K562 (cell line): ENCODE measurements at regions of chr11 and their contacts with region 1.

Region 1: GRCh38 chr11:44286268-44286880 is 23.6 kb downstream of the ALX4 start:
- DNase-seq: peak; percentile 85 to 86 (median 86)
- ATAC-seq: peak; percentile 94
- H3K4me3 ChIP-seq: no peak overlapping the region
- H3K27ac ChIP-seq: no peak overlapping the region
- H3K4me1 ChIP-seq: peaks cover 7 to 13% of the 10 kb centered on the region in 2 experiments; a peak in 4 of 5 replicates
- H3K27me3 ChIP-seq: no peaks in the 10 kb centered on the region
- CTCF ChIP-seq: peak; percentile 93 to 97 (median 95)
- EP300 ChIP-seq: no peak; the same call in 1 of the 2 replicates
- POLR2A ChIP-seq: no peak
- RAD21 ChIP-seq: peak; percentile 96 to 98

Region 2: GRCh38 chr11:44110231-44110679 is 176.1 kb before region 1 on chr11:
- CTCF ChIA-PET with region 1: no interaction called
- POLR2A ChIA-PET with region 1: no interaction called
- in situ Hi-C with region 1: no loop called
- intact Hi-C with region 1: loop called (anchors 5 kb)
- DNase-seq: peak; percentile 60 to 75 (median 66)
- ATAC-seq: peak; percentile 100
- H3K4me3 ChIP-seq: no peak overlapping the region
- H3K27ac ChIP-seq: no peak overlapping the region
- H3K4me1 ChIP-seq: no peaks in the 10 kb centered on the region
- H3K27me3 ChIP-seq: no peaks in the 10 kb centered on the region
- CTCF ChIP-seq: peak; percentile 78 to 93 (median 84)
- EP300 ChIP-seq: no peak
- POLR2A ChIP-seq: no peak
- RAD21 ChIP-seq: peak; percentile 72 to 75

Region 3: DNA sequence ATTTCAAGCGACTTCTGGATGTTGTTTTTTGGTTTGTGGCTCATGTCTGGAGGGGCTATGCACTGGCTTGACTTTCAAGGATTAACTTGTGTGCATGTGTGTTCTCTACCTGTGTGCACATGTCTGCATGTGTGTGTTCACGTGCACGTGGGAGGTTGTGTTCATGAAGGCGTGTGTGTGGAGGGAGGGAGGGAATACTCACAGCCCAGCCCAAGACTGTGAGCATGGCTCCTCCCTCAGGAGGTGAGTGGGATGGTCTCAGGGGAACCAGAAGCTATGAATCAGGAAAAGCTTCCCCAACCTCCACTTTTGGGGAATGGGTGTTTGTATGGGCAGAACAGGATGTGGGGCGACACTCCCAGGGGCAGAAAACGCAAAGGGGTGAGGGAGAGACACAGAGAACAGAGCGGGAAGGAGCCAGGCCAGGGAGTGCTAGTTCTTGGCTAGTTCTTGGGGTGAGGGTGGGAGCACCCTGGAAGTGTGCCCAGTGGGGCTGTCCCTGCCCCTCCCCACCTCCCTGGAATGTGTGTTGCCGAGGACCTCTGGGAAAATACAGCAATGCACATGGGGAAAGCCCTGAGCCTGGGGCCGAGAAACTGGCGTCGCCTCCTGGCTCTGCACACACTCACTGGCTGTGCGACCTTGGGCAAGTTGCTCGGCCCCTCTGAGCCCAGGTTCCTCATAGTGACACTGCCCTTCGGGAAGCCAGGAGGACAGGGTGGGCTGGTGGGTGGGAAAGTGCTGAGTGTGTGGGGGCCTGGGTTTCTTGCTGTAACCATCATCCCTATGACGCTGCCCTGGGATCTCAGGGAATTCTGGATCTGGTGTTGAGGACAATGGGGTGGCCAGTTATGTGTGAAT is 40.5 kb after region 1 on chr11:
- CTCF ChIA-PET with region 1: interaction called, 4 read pairs
- POLR2A ChIA-PET with region 1: no interaction called
- in situ Hi-C with region 1: no loop called
- intact Hi-C with region 1: loop called (anchors 1 kb)
- DNase-seq: peak; percentile 59 to 76 (median 70)
- ATAC-seq: peak; percentile 89
- H3K4me3 ChIP-seq: no peak overlapping the region
- H3K27ac ChIP-seq: no peak overlapping the region; the same call in 2 of the 3 replicates
- H3K4me1 ChIP-seq: peaks cover 9 to 26% of the 10 kb centered on the region in 2 experiments
- H3K27me3 ChIP-seq: no peaks in the 10 kb centered on the region; a peak in 1 of 5 replicates
- CTCF ChIP-seq: peak; percentile 48 to 74 (median 59); a peak in 3 of 6 replicates
- EP300 ChIP-seq: no peak
- POLR2A ChIP-seq: no peak
- RAD21 ChIP-seq: peak; percentile 77 to 83

Region 4: DNA sequence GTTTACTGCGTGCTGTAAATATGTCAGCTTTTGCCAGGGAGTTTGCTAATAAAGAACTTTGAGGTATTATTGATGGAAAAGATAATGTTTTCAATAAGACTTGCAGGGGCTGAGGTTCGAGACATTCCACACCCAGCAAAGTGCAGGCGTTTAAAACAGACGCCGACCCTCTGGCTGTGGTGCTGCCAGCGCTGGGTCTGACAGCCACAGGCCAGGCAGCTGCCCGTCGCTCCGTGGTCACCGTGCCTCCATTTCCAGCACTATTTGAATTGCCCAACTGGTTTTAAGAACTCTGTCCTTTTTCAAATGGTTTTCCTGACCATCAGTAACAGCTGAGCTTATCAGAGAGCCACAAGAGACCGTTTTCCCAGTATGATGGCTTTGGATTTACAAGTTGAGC is 51.7 kb after region 1 on chr11:
- CTCF ChIA-PET with region 1: no interaction called
- POLR2A ChIA-PET with region 1: no interaction called
- in situ Hi-C with region 1: no loop called
- intact Hi-C with region 1: no loop called
- DNase-seq: peak in 1 of 4 experiments; percentile 29
- ATAC-seq: no peak
- H3K4me3 ChIP-seq: no peak overlapping the region
- H3K27ac ChIP-seq: peak overlapping the region; percentile 33; the same call in 2 of the 3 replicates
- H3K4me1 ChIP-seq: peaks cover 28 to 43% of the 10 kb centered on the region in 2 experiments
- H3K27me3 ChIP-seq: no peaks in the 10 kb centered on the region
- CTCF ChIP-seq: no peak
- EP300 ChIP-seq: no peak
- POLR2A ChIP-seq: no peak
- RAD21 ChIP-seq: no peak

Region 5: DNA sequence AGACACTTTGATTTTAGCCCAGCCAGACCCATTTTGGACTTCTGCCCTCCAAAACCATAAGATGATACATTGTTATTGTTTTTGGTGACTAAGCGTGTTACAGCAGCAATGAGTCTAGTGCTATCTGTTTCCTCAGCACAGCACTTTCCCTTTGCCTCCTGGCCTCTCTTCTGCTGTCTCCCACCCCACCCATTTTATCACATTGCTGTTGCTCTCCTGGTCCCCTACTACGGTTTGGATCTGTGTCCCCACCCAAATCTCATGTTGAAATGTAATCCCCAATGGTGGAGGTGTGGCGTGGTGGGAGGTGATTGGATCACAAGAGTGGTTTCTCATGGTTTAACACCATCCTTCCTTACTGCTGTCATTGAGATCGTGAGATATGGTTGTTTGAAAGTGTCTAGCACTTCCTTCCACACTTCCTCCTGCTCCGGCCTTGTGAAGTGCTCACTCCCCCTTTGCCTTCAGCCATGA is 219.2 kb after region 1 on chr11:
- CTCF ChIA-PET with region 1: no interaction called
- POLR2A ChIA-PET with region 1: no interaction called
- in situ Hi-C with region 1: no loop called
- intact Hi-C with region 1: no loop called
- DNase-seq: peak in 2 of 4 experiments; percentile 55 to 66
- ATAC-seq: peak; percentile 80
- H3K4me3 ChIP-seq: no peak overlapping the region
- H3K27ac ChIP-seq: peak overlapping the region; percentile 53; the same call in 2 of the 3 replicates
- H3K4me1 ChIP-seq: peaks cover 7 to 17% of the 10 kb centered on the region in 2 experiments; a peak in 4 of 5 replicates
- H3K27me3 ChIP-seq: no peaks in the 10 kb centered on the region
- CTCF ChIP-seq: no peak
- EP300 ChIP-seq: peak; percentile 29; the same call in 1 of the 2 replicates
- POLR2A ChIP-seq: no peak
- RAD21 ChIP-seq: no peak

Region 6: GRCh38 chr11:44519989-44520737 is 233.8 kb after region 1 on chr11:
- CTCF ChIA-PET with region 1: no interaction called
- POLR2A ChIA-PET with region 1: no interaction called
- in situ Hi-C with region 1: no loop called
- intact Hi-C with region 1: loop called (anchors 5 kb)
- DNase-seq: no peak
- ATAC-seq: no peak
- H3K4me3 ChIP-seq: no peak overlapping the region
- H3K27ac ChIP-seq: no peak overlapping the region
- H3K4me1 ChIP-seq: peaks cover 16 to 20% of the 10 kb centered on the region in 2 experiments
- H3K27me3 ChIP-seq: no peaks in the 10 kb centered on the region
- CTCF ChIP-seq: no peak
- EP300 ChIP-seq: no peak
- POLR2A ChIP-seq: no peak
- RAD21 ChIP-seq: no peak

Region 7: DNA sequence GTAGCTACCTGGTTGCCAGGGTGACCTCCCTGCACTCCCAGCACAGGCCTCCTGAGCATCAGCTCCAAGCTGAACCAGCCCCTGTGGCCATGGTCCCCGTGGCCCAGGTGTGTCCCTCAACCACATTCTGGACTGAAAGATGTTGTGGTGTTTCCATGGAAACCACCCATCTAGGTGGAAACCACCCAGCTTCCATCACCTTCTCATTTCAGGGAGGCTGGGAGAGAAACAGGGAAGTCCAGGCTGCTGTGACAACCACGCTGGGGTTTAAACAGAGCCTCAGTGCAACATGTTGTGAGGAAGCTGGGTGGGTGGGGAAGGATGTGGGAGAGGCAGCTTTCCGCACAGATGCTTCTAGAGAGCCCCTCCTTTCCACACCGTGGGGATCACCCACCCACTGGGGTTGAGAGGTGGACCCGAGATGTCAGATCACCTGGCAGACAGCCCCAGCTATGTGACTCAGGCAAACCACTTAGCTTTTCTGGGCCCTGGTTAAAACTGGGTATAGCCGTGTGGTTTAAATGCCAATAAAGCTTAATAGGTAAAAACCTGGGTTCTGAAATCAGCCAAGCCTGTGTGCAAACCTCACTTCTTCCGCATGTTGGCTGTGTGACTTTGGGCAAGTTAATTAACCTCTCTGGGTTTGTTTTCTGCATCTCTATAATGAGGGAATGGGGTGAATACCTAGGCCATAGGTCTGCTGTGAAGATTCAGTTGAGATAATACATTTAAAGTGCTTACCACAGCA is 325.5 kb after region 1 on chr11:
- CTCF ChIA-PET with region 1: interaction called, 10 read pairs
- POLR2A ChIA-PET with region 1: no interaction called
- in situ Hi-C with region 1: loop called (anchors 5 kb)
- intact Hi-C with region 1: loop called (anchors 2 kb)
- DNase-seq: no peak
- ATAC-seq: no peak
- H3K4me3 ChIP-seq: no peak overlapping the region
- H3K27ac ChIP-seq: no peak overlapping the region
- H3K4me1 ChIP-seq: peaks cover 27 to 32% of the 10 kb centered on the region in 2 experiments; a peak in 4 of 5 replicates
- H3K27me3 ChIP-seq: no peaks in the 10 kb centered on the region
- CTCF ChIP-seq: no peak
- EP300 ChIP-seq: no peak
- POLR2A ChIP-seq: no peak
- RAD21 ChIP-seq: no peak